AG04450 (cell line): ENCODE measurements at regions of chr17 and their contacts with region 1.

Region 1: GRCh38 chr17:59561042-59561441 is 4.4 kb upstream of the DHX40 start:
- DNase-seq: no peak
- H3K4me3 ChIP-seq: no peak overlapping the region
- H3K27ac ChIP-seq: no peak overlapping the region
- H3K27me3 ChIP-seq: peaks cover 3% of the 10 kb centered on the region
- CTCF ChIP-seq: peak; percentile 42

Region 2: DNA sequence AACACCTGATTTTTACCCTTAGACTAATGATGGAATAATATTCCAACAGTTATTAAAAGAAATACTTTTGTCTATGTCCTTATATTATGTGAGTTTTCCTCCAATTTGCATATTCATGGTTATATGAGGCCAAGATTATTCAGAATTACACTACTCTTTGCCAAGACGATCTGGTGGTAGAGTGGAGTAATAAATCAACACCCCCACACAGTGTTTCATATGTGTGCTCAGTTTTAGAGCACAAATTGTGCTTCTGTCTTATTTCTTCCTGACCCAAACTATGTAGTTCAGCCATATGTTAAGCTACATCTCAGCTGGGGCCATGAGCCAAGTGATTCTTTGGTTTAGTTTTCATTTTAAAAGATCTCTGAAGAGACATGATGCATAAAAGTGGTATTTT is 832.3 kb before region 1 on chr17:
- CTCF ChIA-PET with region 1: no interaction called
- POLR2A ChIA-PET with region 1: no interaction called
- DNase-seq: no peak
- H3K4me3 ChIP-seq: no peak overlapping the region
- H3K27ac ChIP-seq: no peak overlapping the region
- H3K27me3 ChIP-seq: no peaks in the 10 kb centered on the region
- CTCF ChIP-seq: no peak

Region 3: GRCh38 chr17:59300682-59301321 is 260.2 kb before region 1 on chr17:
- CTCF ChIA-PET with region 1: no interaction called
- POLR2A ChIA-PET with region 1: interaction called, 11 read pairs
- DNase-seq: no peak
- H3K4me3 ChIP-seq: no peak overlapping the region
- H3K27ac ChIP-seq: no peak overlapping the region
- H3K27me3 ChIP-seq: peaks cover 2% of the 10 kb centered on the region
- CTCF ChIP-seq: no peak